ENCODE measurements at regions of chr6 and their contacts with region 1.

Region 1: GRCh38 chr6:170087941-170088581 is 202.8 kb downstream of the DLL1 start:
- DNase-seq: peak; percentile 44
- ATAC-seq: peak; percentile 57
- H3K4me3 Mint-ChIP-seq: peak overlapping the region; percentile 82
- H3K27ac Mint-ChIP-seq: peak overlapping the region; percentile 85
- H3K4me1 Mint-ChIP-seq: peaks cover 30% of the 10 kb centered on the region
- H3K27me3 Mint-ChIP-seq: no peaks in the 10 kb centered on the region
- CTCF ChIP-seq: no peak

Region 2: DNA sequence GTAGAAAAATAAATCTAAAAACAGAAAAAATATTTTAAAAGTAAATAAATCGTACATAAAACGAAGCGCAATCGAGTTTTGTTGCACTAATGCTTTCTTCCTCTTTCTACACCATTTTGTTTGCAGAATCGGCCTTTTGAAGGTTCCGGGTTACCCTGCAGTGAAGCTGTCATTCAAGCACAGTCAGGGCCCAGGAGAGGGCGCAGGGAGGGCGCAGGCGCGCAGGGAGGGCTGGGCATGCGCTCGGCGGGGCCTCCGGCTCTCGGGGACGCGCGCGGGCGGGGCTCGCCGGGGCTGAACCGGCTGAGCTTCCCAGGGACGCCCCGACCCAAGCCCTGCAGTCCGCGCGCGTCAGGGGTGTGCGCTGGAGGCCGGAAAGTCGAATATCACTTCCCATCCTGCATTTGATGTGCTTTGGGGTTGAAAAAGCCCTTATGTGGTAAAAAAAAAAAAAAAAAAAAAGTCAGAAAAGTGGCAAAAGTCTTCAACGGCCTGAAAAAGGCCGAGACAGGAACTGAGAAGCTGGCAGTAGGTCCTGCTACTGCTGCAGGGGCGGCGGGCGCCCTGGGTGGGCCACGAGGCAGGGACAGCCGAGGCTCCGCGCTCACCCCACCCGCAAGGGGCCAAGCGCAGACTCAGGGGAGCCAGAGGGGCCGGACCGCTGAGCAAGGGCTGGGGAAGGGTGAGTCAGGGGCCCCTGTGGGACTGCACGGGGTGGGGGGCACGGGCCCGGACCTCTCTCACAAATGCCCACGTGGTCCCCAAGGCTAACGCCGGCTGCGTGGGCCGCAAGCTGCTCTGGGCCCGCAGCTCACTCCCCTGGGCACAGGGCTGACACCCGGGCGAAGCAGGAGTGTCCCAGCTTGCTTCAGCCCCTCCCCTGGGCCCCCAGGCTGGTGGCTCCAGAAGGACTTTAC is 874.9 kb before region 1 on chr6:
- CTCF ChIA-PET with region 1: no interaction called
- POLR2A ChIA-PET with region 1: interaction called, 15 read pairs
- intact Hi-C with region 1: no loop called
- DNase-seq: peak; percentile 82
- ATAC-seq: peak; percentile 98
- H3K4me3 Mint-ChIP-seq: peak overlapping the region; percentile 69
- H3K27ac Mint-ChIP-seq: peak overlapping the region; percentile 68
- H3K4me1 Mint-ChIP-seq: peaks cover 2% of the 10 kb centered on the region
- H3K27me3 Mint-ChIP-seq: no peaks in the 10 kb centered on the region
- CTCF ChIP-seq: no peak

Region 3: GRCh38 chr6:169959136-169960002 is 128.7 kb before region 1 on chr6:
- CTCF ChIA-PET with region 1: no interaction called
- POLR2A ChIA-PET with region 1: no interaction called
- intact Hi-C with region 1: loop called (anchors 1 kb)
- DNase-seq: peak; percentile 33
- ATAC-seq: peak; percentile 91
- H3K4me3 Mint-ChIP-seq: peak overlapping the region; percentile 64
- H3K27ac Mint-ChIP-seq: peak overlapping the region; percentile 76
- H3K4me1 Mint-ChIP-seq: peaks cover 23% of the 10 kb centered on the region
- H3K27me3 Mint-ChIP-seq: peaks cover 18% of the 10 kb centered on the region
- CTCF ChIP-seq: no peak

Region 4: DNA sequence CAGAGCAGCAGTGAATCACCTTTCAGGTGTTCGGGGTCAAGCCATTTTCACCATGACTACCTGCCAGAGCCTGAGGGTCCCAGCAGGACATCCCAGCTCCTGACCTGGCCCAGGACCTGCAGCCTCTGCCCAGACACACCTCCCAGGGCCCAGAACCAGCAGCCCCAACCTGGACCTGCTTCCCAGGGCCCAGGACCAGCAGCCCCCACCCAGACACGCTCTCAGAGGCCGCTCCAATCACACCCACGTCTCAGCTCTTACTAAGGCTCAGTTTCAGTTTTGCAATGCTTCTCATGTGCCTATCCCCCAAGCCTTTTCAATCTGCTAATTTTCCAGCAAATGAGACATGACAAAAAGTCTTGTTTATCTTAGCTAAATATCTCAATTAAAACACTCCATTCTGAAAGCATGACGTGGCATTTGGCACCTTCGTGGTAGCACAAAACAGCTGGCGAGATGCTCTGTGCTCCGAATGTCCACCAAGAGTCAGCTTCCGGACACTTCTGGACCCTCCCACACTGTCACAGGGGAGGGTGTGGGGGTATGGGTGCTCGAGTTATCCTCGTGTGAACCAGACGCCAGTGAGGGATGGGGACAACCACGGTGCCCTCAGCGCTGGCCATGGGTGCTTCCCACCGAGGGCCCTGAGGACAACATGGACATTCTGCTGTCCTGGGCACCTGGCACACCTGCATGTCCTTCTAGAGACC is 50.4 kb before region 1 on chr6:
- CTCF ChIA-PET with region 1: no interaction called
- POLR2A ChIA-PET with region 1: no interaction called
- intact Hi-C with region 1: no loop called
- DNase-seq: no peak
- ATAC-seq: no peak
- H3K4me3 Mint-ChIP-seq: no peak overlapping the region
- H3K27ac Mint-ChIP-seq: no peak overlapping the region
- H3K4me1 Mint-ChIP-seq: no peaks in the 10 kb centered on the region
- H3K27me3 Mint-ChIP-seq: peaks cover 1% of the 10 kb centered on the region
- CTCF ChIP-seq: no peak

Region 5: GRCh38 chr6:170360476-170360875 is 272.4 kb after region 1 on chr6:
- CTCF ChIA-PET with region 1: no interaction called
- POLR2A ChIA-PET with region 1: no interaction called
- intact Hi-C with region 1: no loop called
- DNase-seq: no peak
- ATAC-seq: no peak
- H3K4me3 Mint-ChIP-seq: no peak overlapping the region
- H3K27ac Mint-ChIP-seq: no peak overlapping the region
- H3K4me1 Mint-ChIP-seq: no peaks in the 10 kb centered on the region
- H3K27me3 Mint-ChIP-seq: no peaks in the 10 kb centered on the region
- CTCF ChIP-seq: no peak

Region 6: DNA sequence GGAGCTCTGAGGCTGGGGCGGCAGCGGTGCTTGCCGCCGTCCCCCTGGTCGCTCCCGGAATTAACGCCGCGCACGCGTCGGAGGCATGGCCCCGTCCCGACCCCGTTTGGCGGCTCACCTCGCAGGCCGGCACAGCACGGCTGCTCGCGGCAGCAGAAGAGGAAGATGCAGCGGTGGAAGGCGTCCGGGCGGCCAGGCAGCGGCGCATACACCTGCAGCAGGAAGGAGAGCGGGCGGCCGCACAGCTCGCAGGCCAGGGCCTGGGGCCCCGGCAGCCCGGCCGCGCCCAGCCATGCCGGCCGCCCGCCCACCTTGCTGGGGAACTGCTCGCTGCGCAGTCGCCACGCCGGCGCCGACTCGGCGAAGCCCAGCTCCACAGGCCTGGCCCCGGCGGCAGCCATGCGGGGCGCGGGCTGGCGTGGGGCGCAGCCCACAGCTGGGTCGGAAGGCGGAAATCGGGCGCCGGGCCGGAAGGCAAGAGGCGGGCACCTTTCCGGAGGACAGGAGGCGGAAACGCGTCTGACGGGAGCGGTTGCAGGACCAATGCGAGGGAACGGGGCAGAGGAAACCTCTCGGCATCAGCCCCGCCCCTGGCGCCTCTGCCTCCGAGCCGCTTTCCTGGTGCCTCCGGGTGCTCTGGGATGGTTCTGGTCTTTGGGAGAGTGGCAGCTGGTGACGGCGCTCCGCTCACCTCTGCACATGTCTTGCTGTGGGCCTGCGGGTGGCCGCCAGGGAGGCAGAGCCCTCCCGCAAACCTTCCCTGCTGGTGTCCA is 496.3 kb after region 1 on chr6 and contains the start of gene PDCD2:
- CTCF ChIA-PET with region 1: no interaction called
- POLR2A ChIA-PET with region 1: no interaction called
- intact Hi-C with region 1: loop called (anchors 10 kb)
- DNase-seq: peak; percentile 86
- ATAC-seq: peak; percentile 95
- H3K4me3 Mint-ChIP-seq: peak within 1 kb of the TSS; percentile 98
- H3K27ac Mint-ChIP-seq: peak within 1 kb of the TSS; percentile 94
- H3K4me1 Mint-ChIP-seq: peaks cover 20% of the 10 kb centered on the region
- H3K27me3 Mint-ChIP-seq: no peaks in the 10 kb centered on the region
- CTCF ChIP-seq: no peak
- total RNA-seq, gene PDCD2: 88.4 and 90.8 TPM in 2 replicates

Measured in activated B cell treated with CpG ODN at 0.5 μM for 24 hours (primary cell).